ENCODE measurements at regions of chr10 and their contacts with region 1.

Region 1: DNA sequence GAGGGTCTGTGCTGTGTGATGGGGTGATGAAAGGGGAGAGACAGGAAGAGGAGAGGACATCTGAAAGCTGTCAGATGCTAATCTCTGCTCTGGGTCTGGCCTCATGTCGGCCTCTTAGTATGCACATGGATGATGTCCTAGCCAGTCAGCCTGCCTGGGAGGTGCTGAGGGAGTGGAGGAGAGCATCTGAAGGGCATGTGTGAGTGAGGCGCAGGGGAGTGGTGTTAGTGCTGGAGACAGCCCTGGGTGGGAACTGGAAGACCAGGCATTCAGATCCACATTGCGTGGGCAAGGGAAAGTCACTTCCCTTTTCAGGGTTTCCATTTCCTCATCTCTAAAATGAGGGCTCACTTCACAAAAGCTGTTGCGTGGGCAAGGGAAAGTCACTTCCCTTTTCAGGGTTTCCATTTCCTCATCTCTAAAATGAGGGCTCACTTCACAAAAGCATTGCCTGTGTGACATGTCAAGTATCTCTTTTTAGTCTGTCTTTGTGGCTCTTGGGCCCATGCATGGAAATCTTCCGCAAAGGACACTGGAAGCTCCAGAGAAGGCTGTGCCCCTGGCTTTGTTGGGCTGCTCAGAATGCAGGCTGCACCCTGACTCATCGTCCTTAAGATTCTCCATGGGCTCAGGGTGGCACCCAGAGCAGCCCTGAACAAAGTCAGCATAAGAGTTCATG is 10.0 kb downstream of the SFTPD start:
- DNase-seq: no peak
- H3K4me3 ChIP-seq: no peak overlapping the region
- H3K27ac ChIP-seq: no peak overlapping the region
- H3K4me1 ChIP-seq: no peaks in the 10 kb centered on the region
- H3K27me3 ChIP-seq: no peaks in the 10 kb centered on the region
- CTCF ChIP-seq: no peak

Region 2: DNA sequence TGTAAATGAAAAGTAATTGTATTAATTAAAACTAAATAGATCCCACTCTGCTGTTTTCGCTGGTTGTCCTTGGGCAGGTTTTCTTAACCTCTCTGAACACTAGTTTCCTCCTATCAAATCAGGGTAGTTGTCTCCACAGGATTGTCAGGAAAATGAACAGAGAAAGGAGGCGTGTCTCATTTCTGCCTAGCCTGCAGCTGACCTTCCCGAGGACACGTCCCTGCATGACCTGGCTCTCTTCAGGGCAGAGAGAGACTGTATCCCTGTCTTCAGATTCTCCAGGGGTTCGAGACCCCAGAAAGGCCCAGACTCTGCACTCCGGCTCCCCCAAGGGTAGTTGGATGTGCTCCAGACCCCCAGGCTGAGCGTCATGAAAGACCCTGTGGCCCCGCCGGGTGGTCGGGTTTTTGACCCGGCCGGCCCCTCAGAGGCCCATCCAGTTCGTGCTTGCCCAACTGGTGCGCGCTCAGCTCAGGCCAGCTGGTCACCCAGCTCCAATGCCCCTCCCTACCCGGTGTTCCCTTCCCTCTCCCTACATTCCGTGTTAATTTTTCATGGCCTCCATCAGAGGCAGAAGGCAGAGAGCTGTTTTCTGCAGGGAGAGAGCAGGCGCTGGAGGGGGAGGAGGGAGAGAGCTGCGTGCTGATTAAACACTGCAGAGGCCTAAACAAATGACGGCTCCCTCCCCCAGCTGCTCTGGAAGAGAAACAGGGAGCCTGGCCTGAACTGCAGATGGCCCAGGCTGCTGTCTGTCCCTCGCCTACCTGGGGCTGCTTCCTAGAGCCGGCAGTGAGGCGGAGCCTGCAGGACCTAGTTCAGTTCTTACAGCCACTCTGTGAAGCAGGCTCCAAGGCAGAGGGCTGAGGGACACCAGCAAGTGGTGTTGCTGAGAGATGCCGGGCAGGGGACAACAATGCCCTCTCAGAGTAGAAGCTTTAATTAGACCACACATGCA is 677.8 kb before region 1 on chr10:
- CTCF ChIA-PET with region 1: no interaction called
- POLR2A ChIA-PET with region 1: no interaction called
- intact Hi-C with region 1: no loop called
- DNase-seq: no peak
- H3K4me3 ChIP-seq: no peak overlapping the region
- H3K27ac ChIP-seq: no peak overlapping the region
- H3K4me1 ChIP-seq: peaks cover 6% of the 10 kb centered on the region
- H3K27me3 ChIP-seq: no peaks in the 10 kb centered on the region
- CTCF ChIP-seq: no peak

Region 3: DNA sequence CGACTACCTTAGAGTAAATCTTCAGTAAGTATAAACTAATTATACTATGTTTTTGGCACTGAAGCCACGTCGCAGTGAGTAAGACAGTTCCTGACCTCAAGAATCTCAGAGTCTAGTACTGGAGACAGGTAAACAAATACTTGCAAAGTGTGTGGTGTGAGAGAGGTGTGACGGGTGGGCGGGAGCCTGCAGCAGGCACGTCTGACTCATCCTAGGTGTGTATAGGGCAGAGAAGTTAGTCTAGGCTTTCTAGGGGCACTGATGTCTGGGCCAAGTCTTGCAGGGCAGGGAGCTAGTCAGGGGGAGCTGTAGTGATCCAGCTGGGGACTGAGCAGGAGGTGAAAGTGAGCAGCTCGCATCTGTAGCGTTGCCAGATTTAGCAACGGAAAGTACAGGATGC is 46.0 kb after region 1 on chr10:
- CTCF ChIA-PET with region 1: no interaction called
- POLR2A ChIA-PET with region 1: no interaction called
- intact Hi-C with region 1: loop called (anchors 5 kb)
- DNase-seq: no peak
- H3K4me3 ChIP-seq: no peak overlapping the region
- H3K27ac ChIP-seq: no peak overlapping the region
- H3K4me1 ChIP-seq: no peaks in the 10 kb centered on the region
- H3K27me3 ChIP-seq: peaks cover 43% of the 10 kb centered on the region
- CTCF ChIP-seq: no peak